CD8-positive, alpha-beta T cell (primary cell): ENCODE measurements at regions of chr6 and their contacts with region 1.

Region 1: DNA sequence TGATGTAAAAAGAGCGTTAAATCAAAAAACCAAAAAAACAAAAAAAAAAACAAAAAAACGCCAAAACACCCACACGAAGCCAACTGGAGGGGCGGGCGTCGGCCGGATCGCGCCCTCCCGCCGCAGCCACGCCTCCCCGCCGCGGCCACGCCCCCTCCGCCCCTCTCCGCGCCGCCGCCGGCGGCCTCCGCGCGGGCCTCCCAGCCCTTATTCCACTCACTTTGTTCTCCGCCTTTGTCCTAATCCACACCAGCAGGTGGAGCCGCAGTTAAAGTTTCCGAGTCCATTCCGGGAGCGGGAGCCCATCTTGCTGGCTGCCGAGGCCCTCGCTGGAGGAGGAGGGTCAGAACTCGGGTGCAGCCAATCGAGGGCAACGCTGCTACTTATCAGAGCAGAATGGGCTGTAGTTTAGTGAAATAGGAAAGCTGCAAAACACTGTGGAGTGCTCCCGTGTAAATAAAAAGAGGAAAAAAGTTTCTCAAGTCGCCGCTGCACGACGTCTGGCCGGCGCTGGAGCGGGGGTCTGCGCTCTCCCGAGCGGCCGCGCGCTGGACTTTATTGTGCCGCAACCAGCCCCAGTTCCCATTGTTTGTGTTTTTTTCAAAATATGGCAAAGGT is at the start of gene ASF1A:
- DNase-seq: peak; percentile 90 to 98 (median 95)
- ATAC-seq: peak; percentile 76
- H3K4me3 ChIP-seq: peak within 1 kb of the TSS; percentile 82 to 94
- H3K4me3 Mint-ChIP-seq: peak within 1 kb of the TSS; percentile 93
- H3K27ac ChIP-seq: peak within 1 kb of the TSS; percentile 78 to 79
- H3K27ac Mint-ChIP-seq: peak within 1 kb of the TSS; percentile 99
- H3K4me1 ChIP-seq: peaks cover 60% of the 10 kb centered on the region
- H3K4me1 Mint-ChIP-seq: peaks cover 66% of the 10 kb centered on the region
- H3K27me3 ChIP-seq: no peaks in the 10 kb centered on the region
- H3K27me3 Mint-ChIP-seq: no peaks in the 10 kb centered on the region
- CTCF ChIP-seq: no peak
- total RNA-seq, gene ASF1A: 15.6 to 17.1 TPM

Region 2: DNA sequence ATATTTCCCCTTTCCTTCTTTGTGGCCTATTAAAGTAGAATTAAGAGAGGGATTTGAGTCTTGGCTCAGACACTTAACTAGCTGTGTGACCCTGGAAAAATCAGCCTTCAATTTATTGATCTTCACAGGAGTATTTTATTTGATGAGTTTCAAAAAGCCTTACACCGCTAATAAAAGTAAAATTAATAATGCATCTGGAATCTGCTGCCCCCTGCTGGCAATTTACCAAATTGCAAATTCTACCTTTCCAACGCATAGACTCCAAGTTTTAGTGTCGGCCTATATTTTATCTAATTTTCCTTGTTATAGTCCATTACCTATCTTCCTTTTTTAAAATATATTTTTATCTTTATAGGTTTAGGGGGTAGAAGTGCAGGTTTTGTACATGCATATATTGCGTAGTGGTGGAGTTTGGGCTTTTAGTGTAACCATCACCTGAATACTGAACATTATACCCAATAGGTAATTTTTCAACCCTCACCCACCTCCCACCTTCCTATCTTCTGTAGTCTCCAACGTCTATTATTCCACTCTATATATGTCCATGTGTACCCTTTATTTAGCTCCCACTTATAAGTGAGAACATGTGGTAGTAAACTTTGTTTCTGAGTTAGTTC is 1337.9 kb before region 1 on chr6:
- CTCF ChIA-PET with region 1: no interaction called
- POLR2A ChIA-PET with region 1: no interaction called
- intact Hi-C with region 1: loop called in 1 of 2 experiments (anchors 10 kb)
- DNase-seq: peak in 8 of 9 experiments; percentile 26 to 78 (median 65)
- ATAC-seq: peak; percentile 55
- H3K4me3 ChIP-seq: no peak overlapping the region
- H3K4me3 Mint-ChIP-seq: no peak overlapping the region
- H3K27ac ChIP-seq: no peak overlapping the region
- H3K27ac Mint-ChIP-seq: no peak overlapping the region
- H3K4me1 ChIP-seq: peaks cover under 1% of the 10 kb centered on the region
- H3K4me1 Mint-ChIP-seq: peaks cover 8% of the 10 kb centered on the region
- H3K27me3 ChIP-seq: no peaks in the 10 kb centered on the region
- H3K27me3 Mint-ChIP-seq: no peaks in the 10 kb centered on the region
- CTCF ChIP-seq: peak; percentile 97

Region 3: DNA sequence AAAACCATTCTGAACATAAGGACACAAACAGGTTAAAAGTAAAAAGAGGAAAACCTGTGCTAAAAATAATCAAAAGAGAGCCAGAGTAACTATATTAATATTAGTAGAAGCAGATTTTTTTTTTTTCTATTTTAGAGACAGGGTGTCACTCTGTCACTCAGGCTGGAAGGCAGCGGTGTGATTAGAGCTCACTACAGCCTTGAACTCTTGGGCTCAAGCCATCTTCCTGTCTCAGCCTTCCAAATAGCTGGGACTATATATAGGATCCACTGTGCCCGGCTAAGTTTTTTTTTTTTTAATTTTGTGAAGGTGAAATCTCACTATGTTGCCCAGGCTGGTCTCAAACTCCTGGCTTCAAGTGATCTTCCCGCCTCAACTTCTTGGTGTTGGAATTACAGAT is 379.2 kb before region 1 on chr6:
- CTCF ChIA-PET with region 1: no interaction called
- POLR2A ChIA-PET with region 1: no interaction called
- intact Hi-C with region 1: no loop called
- DNase-seq: no peak
- ATAC-seq: no peak
- H3K4me3 ChIP-seq: no peak overlapping the region
- H3K4me3 Mint-ChIP-seq: no peak overlapping the region
- H3K27ac ChIP-seq: no peak overlapping the region
- H3K27ac Mint-ChIP-seq: no peak overlapping the region
- H3K4me1 ChIP-seq: no peaks in the 10 kb centered on the region
- H3K4me1 Mint-ChIP-seq: peaks cover 50% of the 10 kb centered on the region
- H3K27me3 ChIP-seq: no peaks in the 10 kb centered on the region
- H3K27me3 Mint-ChIP-seq: no peaks in the 10 kb centered on the region
- CTCF ChIP-seq: no peak

Region 4: DNA sequence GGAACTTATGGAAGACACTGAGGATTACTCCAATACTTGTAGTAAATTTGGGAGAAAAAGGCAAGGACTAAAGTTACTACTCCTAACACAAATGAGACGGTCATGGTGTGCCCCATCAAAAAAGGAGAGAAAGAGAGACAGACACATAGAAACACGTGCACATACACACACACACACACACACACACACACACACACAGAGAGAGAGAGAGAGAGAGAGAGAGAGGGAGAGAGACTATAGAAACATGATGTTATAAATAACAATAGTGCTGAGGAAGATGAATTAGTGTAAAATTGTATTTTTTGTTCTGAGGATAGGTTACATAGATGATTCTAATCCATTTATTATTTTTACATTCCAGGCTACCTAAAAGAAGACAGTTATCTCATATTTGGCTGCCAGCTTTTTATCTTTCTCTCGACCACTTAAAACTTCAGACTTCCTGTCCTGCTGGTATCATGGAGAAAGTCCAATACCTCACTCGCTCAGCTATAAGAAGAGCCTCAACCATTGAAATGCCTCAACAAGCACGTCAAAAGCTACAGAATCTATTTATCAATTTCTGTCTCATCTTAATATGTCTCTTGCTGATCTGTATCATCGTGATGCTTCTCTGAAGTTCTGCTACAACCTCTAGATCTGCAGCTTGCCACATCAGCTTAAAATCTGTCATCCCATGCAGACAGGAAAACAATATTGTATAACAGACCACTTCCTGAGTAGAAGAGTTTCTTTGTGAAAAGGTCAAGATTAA is 335.3 kb before region 1 on chr6:
- CTCF ChIA-PET with region 1: interaction called, 3 read pairs
- POLR2A ChIA-PET with region 1: interaction called, 15 read pairs
- intact Hi-C with region 1: no loop called
- DNase-seq: peak in 5 of 9 experiments; percentile 11 to 80 (median 45)
- ATAC-seq: peak; percentile 90
- H3K4me3 ChIP-seq: peak overlapping the region; percentile 16 to 18
- H3K4me3 Mint-ChIP-seq: peak overlapping the region; percentile 73
- H3K27ac ChIP-seq: peak overlapping the region; percentile 67 to 78
- H3K27ac Mint-ChIP-seq: peak overlapping the region; percentile 97
- H3K4me1 ChIP-seq: peaks cover 23% of the 10 kb centered on the region
- H3K4me1 Mint-ChIP-seq: peaks cover 58% of the 10 kb centered on the region
- H3K27me3 ChIP-seq: no peaks in the 10 kb centered on the region
- H3K27me3 Mint-ChIP-seq: no peaks in the 10 kb centered on the region
- CTCF ChIP-seq: no peak

Region 5: DNA sequence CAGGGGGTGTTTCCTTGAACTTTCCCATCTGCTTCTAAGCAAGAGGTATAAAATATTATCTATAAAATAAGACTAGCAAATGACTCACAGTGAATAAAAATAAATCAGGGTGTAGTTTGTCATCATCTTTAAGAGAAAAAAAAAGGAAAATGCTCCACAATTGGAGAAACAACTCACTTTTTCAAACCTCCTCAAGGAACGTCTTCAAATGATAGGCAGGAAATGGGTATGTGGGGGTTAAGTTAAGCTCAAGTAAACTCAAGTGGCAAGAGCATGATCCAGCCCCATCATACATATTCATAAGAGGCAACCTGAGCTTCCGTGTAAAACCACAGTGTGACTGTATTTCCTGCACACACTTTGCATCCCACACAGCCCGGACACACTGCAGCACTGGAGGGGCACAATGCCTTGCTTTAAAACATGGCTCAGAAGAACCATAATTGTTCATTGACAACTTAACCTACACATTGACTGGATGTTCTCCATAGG is 184.0 kb before region 1 on chr6:
- CTCF ChIA-PET with region 1: interaction called, 3 read pairs
- POLR2A ChIA-PET with region 1: interaction called, 17 read pairs
- intact Hi-C with region 1: loop called (anchors 1 to 5 kb)
- DNase-seq: peak; percentile 34 to 93 (median 70)
- ATAC-seq: peak; percentile 89
- H3K4me3 ChIP-seq: peak overlapping the region; percentile 85 to 86
- H3K4me3 Mint-ChIP-seq: peak overlapping the region; percentile 91
- H3K27ac ChIP-seq: peak overlapping the region; percentile 84 to 89
- H3K27ac Mint-ChIP-seq: peak overlapping the region; percentile 93
- H3K4me1 ChIP-seq: peaks cover 64% of the 10 kb centered on the region
- H3K4me1 Mint-ChIP-seq: peaks cover 68% of the 10 kb centered on the region
- H3K27me3 ChIP-seq: no peaks in the 10 kb centered on the region
- H3K27me3 Mint-ChIP-seq: no peaks in the 10 kb centered on the region
- CTCF ChIP-seq: no peak

Region 6: GRCh38 chr6:118810420-118811027 is 83.4 kb before region 1 on chr6:
- CTCF ChIA-PET with region 1: interaction called, 7 read pairs
- POLR2A ChIA-PET with region 1: interaction called, 32 read pairs
- intact Hi-C with region 1: loop called (anchors 2 to 5 kb)
- DNase-seq: peak; percentile 28 to 90 (median 74)
- ATAC-seq: peak; percentile 95
- H3K4me3 ChIP-seq: peak overlapping the region in 1 of 2 experiments; percentile 15
- H3K4me3 Mint-ChIP-seq: peak overlapping the region; percentile 55
- H3K27ac ChIP-seq: peak overlapping the region; percentile 42 to 80
- H3K27ac Mint-ChIP-seq: peak overlapping the region; percentile 87
- H3K4me1 ChIP-seq: peaks cover 28% of the 10 kb centered on the region
- H3K4me1 Mint-ChIP-seq: peaks cover 55% of the 10 kb centered on the region
- H3K27me3 ChIP-seq: no peaks in the 10 kb centered on the region
- H3K27me3 Mint-ChIP-seq: no peaks in the 10 kb centered on the region
- CTCF ChIP-seq: no peak

Region 7: DNA sequence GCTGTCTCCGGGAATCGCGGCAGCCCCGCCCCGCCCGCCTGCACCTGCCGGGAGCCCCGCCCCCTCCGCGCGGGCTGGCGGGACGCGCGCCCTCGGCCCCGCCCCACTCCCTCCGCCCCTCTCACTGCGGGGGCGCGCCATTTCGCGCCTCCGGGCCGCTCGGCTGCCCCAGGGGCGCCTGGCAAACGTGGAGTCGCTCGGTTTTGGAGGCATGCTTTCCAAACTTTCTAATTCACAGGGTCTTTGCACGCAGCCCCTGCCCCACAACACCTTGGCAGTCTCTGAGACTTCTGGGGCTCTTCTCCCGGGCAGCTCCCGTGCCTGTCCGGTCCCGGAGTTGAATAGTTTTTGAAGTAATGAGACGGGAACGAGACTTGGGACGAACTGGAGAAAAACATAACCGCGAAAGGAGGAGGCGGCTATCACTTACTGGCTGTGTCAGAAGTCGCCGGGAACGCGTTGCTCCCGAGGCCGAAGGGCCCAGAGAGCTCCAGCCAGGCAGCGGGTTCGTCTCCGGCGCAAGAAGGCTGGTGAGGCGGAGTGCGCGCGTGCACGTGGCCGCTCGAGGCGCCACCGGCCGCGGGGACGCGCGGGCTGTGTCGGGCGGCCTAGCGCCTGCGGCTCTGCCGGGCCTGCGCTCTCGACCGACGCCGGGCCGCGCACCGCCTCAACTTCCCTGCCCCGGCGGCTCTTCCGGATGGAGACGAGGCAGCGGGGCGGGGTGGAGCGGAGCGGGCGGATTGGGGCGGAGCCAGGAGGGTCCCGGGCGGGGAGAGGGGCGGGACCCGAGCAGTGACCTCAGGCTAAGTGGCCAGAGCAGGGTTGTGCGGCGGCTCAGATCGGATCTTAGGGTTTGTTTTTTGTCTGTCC is 40.8 kb after region 1 on chr6 and contains the start of gene MCM9:
- CTCF ChIA-PET with region 1: no interaction called
- POLR2A ChIA-PET with region 1: interaction called, 33 read pairs
- intact Hi-C with region 1: loop called (anchors 1 to 2 kb)
- DNase-seq: peak; percentile 76 to 95 (median 84)
- ATAC-seq: peak; percentile 87
- H3K4me3 ChIP-seq: peak within 1 kb of the TSS; percentile 96 to 97
- H3K4me3 Mint-ChIP-seq: peak within 1 kb of the TSS; percentile 91
- H3K27ac ChIP-seq: peak within 1 kb of the TSS; percentile 87 to 89
- H3K27ac Mint-ChIP-seq: peak within 1 kb of the TSS; percentile 90
- H3K4me1 ChIP-seq: peaks cover 7% of the 10 kb centered on the region
- H3K4me1 Mint-ChIP-seq: peaks cover 43% of the 10 kb centered on the region
- H3K27me3 ChIP-seq: no peaks in the 10 kb centered on the region
- H3K27me3 Mint-ChIP-seq: no peaks in the 10 kb centered on the region
- CTCF ChIP-seq: no peak
- total RNA-seq, gene MCM9: 32.9 to 34.1 TPM

Region 8: DNA sequence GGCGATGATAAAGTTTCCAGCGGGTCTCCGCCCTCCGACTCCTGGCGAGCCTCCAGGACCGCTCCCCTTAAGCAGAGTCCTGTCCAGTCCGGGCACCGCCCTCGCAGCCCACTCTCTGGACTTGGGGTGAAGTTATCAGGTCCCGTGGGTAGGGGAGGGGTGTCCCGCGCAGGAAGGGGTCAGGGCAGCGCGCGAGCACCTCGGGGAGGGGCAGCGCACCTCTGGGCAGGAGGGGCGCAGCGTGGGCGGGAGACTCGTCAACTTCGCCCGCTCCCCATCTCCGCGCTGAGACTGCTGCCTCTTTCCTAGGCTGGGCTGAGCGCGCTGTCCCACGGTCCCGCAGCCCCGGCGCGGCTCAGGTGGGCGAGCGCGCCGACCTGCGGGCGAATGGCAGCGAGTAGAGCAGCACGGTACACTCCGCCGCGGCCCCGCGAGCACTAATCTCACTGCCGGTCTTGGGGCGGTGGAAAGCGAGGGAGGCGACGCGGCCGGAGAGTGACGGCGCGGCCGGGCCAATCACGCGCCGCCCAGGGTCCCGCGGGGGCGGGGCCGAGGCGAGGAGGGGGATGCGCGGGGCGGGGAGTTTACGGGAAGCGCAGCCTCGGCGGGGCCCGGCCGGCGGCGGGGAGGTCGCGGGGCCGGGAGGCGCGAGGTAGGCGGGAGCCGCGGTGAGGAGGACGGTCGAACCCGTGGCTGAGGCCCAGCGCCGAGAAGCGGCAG is 455.6 kb after region 1 on chr6 and contains the start of gene MAN1A1:
- CTCF ChIA-PET with region 1: no interaction called
- POLR2A ChIA-PET with region 1: no interaction called
- intact Hi-C with region 1: loop called (anchors 5 kb)
- DNase-seq: peak; percentile 79 to 94 (median 88)
- ATAC-seq: peak; percentile 86
- H3K4me3 ChIP-seq: peak within 1 kb of the TSS; percentile 91 to 92
- H3K4me3 Mint-ChIP-seq: peak within 1 kb of the TSS; percentile 90
- H3K27ac ChIP-seq: peak within 1 kb of the TSS; percentile 65 to 67
- H3K27ac Mint-ChIP-seq: peak within 1 kb of the TSS; percentile 88
- H3K4me1 ChIP-seq: peaks cover 30% of the 10 kb centered on the region
- H3K4me1 Mint-ChIP-seq: peaks cover 45% of the 10 kb centered on the region
- H3K27me3 ChIP-seq: no peaks in the 10 kb centered on the region
- H3K27me3 Mint-ChIP-seq: no peaks in the 10 kb centered on the region
- CTCF ChIP-seq: no peak
- total RNA-seq, gene MAN1A1: 8.4 to 8.5 TPM